ENCODE measurements at regions of chr11 and their contacts with region 1.

Region 1: GRCh38 chr11:69131644-69132300 is 24.0 kb upstream of the SMIM38 start:
- DNase-seq: peak; percentile 69
- H3K4me3 ChIP-seq: no peak overlapping the region
- H3K27ac ChIP-seq: no peak overlapping the region
- H3K4me1 ChIP-seq: no peaks in the 10 kb centered on the region
- H3K27me3 ChIP-seq: no peaks in the 10 kb centered on the region
- CTCF ChIP-seq: peak; percentile 65 to 89
- POLR2A ChIP-seq: no peak

Region 2: DNA sequence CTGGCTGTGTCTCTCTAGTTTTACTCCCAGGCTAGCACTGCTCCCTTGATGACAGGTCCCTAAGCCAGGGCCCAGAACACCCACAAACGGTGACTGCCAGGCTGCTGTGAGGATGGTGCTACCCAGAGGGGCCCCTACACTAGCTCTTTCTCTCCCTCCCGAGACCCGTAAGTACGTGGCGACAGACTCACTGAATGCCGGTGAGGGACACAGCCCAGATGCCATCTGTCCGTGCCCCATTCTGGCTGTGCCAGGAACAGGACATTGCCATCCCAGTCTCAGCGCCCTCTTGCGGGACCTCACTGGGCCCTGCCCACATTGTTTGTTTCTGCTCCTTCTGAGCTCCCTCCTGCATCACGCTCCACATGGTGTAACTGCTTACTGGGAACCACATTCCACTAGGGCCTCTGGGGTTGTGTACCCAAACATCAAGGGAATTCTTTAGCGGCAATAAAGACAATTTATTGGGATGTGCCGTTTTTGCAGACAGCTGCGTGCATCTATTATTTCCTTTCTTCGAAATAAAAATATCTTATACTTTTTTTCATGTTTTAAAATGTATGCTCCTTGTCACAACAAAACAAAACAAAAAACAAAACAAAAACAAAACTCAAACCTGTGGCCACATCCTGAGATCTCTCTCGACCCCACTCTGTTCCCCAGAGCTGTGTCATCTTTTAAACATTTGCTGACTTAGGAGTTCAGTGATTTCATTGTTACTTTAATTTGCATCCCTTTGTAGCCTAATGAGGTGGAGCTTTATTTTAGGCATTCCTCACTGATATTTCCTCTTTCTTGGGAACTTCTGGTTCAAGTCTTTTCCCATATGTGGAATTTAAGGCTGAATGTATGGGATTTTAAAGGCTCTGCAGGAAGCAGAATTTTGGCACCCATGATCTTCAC is 87.4 kb before region 1 on chr11:
- CTCF ChIA-PET with region 1: no interaction called
- POLR2A ChIA-PET with region 1: no interaction called
- dilution Hi-C with region 1: no loop called
- intact Hi-C with region 1: no loop called
- DNase-seq: peak; percentile 56
- H3K4me3 ChIP-seq: no peak overlapping the region
- H3K27ac ChIP-seq: no peak overlapping the region
- H3K4me1 ChIP-seq: peaks cover 4% of the 10 kb centered on the region
- H3K27me3 ChIP-seq: peaks cover 1 to 5% of the 10 kb centered on the region in 2 experiments
- CTCF ChIP-seq: peak; percentile 56 to 74
- POLR2A ChIP-seq: no peak

Region 3: DNA sequence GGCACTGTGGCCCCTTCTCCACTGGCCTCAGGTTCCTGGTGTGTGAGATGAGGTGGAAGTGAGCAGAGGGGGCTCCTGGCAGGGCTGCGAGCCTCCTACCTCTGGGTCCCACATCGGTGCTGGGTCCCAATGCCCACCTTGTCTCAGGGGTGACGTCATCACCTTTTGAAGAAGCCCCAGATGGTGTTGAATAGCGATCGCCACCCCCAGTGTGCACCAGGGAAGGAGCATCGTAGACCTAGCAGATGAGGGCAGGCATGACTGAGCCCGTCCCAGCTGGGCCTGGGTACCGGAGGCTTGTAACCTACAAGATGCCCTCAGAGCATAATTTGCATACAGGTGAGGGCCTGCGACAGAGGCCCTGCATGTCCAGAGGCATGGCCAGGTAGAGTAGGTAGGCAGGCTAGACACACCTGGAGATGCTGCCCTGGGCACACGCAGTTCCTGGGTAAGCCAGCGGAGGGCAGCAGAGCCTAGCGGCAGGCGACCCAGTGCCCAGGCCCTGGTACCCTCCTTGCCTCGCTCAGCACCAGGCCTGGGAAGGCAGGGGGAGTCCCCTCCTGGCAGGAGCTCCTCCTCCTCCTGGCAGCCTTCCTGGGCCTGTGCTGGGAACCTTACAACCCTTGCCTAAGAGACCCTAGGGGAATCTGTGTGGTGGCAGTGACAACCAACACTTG is 30.5 kb before region 1 on chr11:
- CTCF ChIA-PET with region 1: interaction called, 46 read pairs
- POLR2A ChIA-PET with region 1: no interaction called
- dilution Hi-C with region 1: no loop called
- intact Hi-C with region 1: loop called (anchors 1 kb)
- DNase-seq: peak; percentile 71
- H3K4me3 ChIP-seq: no peak overlapping the region
- H3K27ac ChIP-seq: no peak overlapping the region
- H3K4me1 ChIP-seq: peaks cover 5% of the 10 kb centered on the region
- H3K27me3 ChIP-seq: peaks cover 0 to 2% of the 10 kb centered on the region in 2 experiments
- CTCF ChIP-seq: peak; percentile 98 to 99
- POLR2A ChIP-seq: peak; percentile 37

Region 4: GRCh38 chr11:69155302-69156234 is 23.8 kb after region 1 on chr11 and contains the start of gene SMIM38:
- CTCF ChIA-PET with region 1: interaction called, 10 read pairs
- POLR2A ChIA-PET with region 1: no interaction called
- dilution Hi-C with region 1: no loop called
- intact Hi-C with region 1: no loop called
- DNase-seq: no peak
- H3K4me3 ChIP-seq: no peak within 1 kb of the TSS
- H3K27ac ChIP-seq: no peak within 1 kb of the TSS
- H3K4me1 ChIP-seq: no peaks in the 10 kb centered on the region
- H3K27me3 ChIP-seq: peaks cover 0 to 6% of the 10 kb centered on the region in 2 experiments
- CTCF ChIP-seq: no peak
- POLR2A ChIP-seq: no peak
- total RNA-seq, gene SMIM38: not detected in 2 replicates

Region 5: DNA sequence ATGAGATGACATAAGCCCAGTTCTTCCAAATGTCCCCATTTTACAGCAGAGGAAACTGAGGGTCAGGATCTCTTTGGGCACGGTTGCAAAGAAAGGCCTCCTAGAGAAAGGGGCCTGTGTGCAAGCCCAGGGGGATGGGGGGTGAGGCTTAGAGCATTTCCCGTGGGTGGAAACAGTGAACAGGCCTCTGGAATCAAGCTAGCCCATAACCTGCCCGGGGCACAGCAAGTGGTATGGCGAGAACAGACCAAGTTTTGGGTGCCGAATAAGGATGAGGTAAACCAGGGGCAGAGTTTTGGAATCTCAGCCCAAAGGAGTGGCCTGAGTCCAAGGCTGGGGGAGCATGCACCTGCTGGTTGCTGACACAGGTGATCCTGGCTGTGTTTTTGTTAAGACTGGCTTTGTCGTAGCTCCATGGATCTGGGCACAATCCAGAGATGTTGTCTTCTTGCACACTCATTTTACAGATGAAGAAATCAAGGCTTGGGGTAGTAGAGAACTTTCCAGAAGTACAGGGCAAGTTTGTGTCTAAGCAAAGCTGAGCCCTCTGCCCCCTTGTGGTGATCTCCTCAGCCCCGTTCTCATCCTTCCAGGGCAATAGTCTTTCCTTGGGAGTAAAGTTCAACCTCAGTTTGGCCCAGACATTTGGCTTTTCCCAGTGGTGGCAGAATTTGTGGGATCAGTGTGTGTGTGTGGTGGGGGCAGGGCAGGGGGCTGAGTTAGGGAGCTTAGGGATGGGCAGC is 108.7 kb after region 1 on chr11:
- CTCF ChIA-PET with region 1: interaction called, 13 read pairs
- POLR2A ChIA-PET with region 1: no interaction called
- dilution Hi-C with region 1: no loop called
- intact Hi-C with region 1: no loop called
- DNase-seq: no peak
- H3K4me3 ChIP-seq: no peak overlapping the region
- H3K27ac ChIP-seq: no peak overlapping the region
- H3K4me1 ChIP-seq: no peaks in the 10 kb centered on the region
- H3K27me3 ChIP-seq: peaks cover 8 to 15% of the 10 kb centered on the region in 2 experiments
- CTCF ChIP-seq: peak in 1 of 2 donors; percentile 34
- POLR2A ChIP-seq: no peak

Region 6: GRCh38 chr11:69443138-69443967 is 311.6 kb after region 1 on chr11:
- CTCF ChIA-PET with region 1: interaction called, 11 read pairs
- POLR2A ChIA-PET with region 1: no interaction called
- dilution Hi-C with region 1: no loop called
- intact Hi-C with region 1: no loop called
- DNase-seq: peak; percentile 91
- H3K4me3 ChIP-seq: peak overlapping the region in 2 of 3 experiments; percentile 10 to 23
- H3K27ac ChIP-seq: peak overlapping the region; percentile 89
- H3K4me1 ChIP-seq: peaks cover 34% of the 10 kb centered on the region
- H3K27me3 ChIP-seq: no peaks in the 10 kb centered on the region
- CTCF ChIP-seq: no peak
- POLR2A ChIP-seq: peak; percentile 91

Region 7: GRCh38 chr11:69497221-69497787 is 365.5 kb after region 1 on chr11:
- CTCF ChIA-PET with region 1: interaction called, 6 read pairs
- POLR2A ChIA-PET with region 1: no interaction called
- dilution Hi-C with region 1: no loop called
- intact Hi-C with region 1: loop called (anchors 2 kb)
- DNase-seq: peak; percentile 83
- H3K4me3 ChIP-seq: no peak overlapping the region
- H3K27ac ChIP-seq: peak overlapping the region; percentile 57
- H3K4me1 ChIP-seq: peaks cover 29% of the 10 kb centered on the region
- H3K27me3 ChIP-seq: no peaks in the 10 kb centered on the region
- CTCF ChIP-seq: no peak
- POLR2A ChIP-seq: no peak

Region 8: GRCh38 chr11:69642913-69643632 is 511.3 kb after region 1 on chr11:
- CTCF ChIA-PET with region 1: interaction called, 85 read pairs
- POLR2A ChIA-PET with region 1: interaction called, 4 read pairs
- dilution Hi-C with region 1: no loop called
- intact Hi-C with region 1: loop called (anchors 1 kb)
- DNase-seq: peak; percentile 77
- H3K4me3 ChIP-seq: peak overlapping the region; percentile 52 to 90 (median 61)
- H3K27ac ChIP-seq: peak overlapping the region; percentile 67
- H3K4me1 ChIP-seq: peaks cover 29% of the 10 kb centered on the region
- H3K27me3 ChIP-seq: no peaks in the 10 kb centered on the region
- CTCF ChIP-seq: peak; percentile 88 to 91
- POLR2A ChIP-seq: no peak